Ascending aorta (tissue), 2 donors: ENCODE measurements at regions of chr11 and their contacts with region 1.

Region 1: GRCh38 chr11:68903288-68904247 is at the starts of genes IGHMBP2 and MRPL21:
- DNase-seq: peak in 1 of 2 donors; percentile 91
- H3K4me3 ChIP-seq: peak within 1 kb of the TSS; percentile 75 to 77
- H3K27ac ChIP-seq: peak within 1 kb of the TSS; percentile 78 to 85
- H3K4me1 ChIP-seq: peaks cover 0 to 17% of the 10 kb centered on the region in 2 donors
- H3K27me3 ChIP-seq: no peaks in the 10 kb centered on the region
- CTCF ChIP-seq: no peak
- total RNA-seq, gene IGHMBP2: 52.0 TPM
- total RNA-seq, gene MRPL21: 14.2 TPM

Region 2: GRCh38 chr11:69048718-69049489 is 145.3 kb after region 1 on chr11 and contains the start of gene TPCN2:
- intact Hi-C with region 1: loop called (anchors 2 kb)
- DNase-seq: peak; percentile 65 to 95
- H3K4me3 ChIP-seq: peak within 1 kb of the TSS; percentile 69 to 97
- H3K27ac ChIP-seq: peak within 1 kb of the TSS; percentile 74 to 93
- H3K4me1 ChIP-seq: peaks cover 6 to 23% of the 10 kb centered on the region in 2 donors
- H3K27me3 ChIP-seq: no peaks in the 10 kb centered on the region
- CTCF ChIP-seq: no peak
- total RNA-seq, gene TPCN2: 24.9 TPM

Region 3: GRCh38 chr11:69088676-69089146 is 185.1 kb after region 1 on chr11:
- intact Hi-C with region 1: loop called (anchors 5 kb)
- DNase-seq: peak in 1 of 2 donors; percentile 79
- H3K4me3 ChIP-seq: no peak overlapping the region
- H3K27ac ChIP-seq: no peak overlapping the region
- H3K4me1 ChIP-seq: no peaks in the 10 kb centered on the region
- H3K27me3 ChIP-seq: no peaks in the 10 kb centered on the region
- CTCF ChIP-seq: peak; percentile 64 to 82 (median 74)